ENCODE measurements at regions of chr3 and their contacts with region 1.

Region 1: GRCh38 chr3:154247806-154248415 is 76.4 kb downstream of the DHX36 start:
- DNase-seq: peak; percentile 45
- H3K4me3 Mint-ChIP-seq: no peak overlapping the region
- H3K27ac Mint-ChIP-seq: peak overlapping the region; percentile 29
- H3K4me1 Mint-ChIP-seq: peaks cover 61% of the 10 kb centered on the region
- H3K27me3 Mint-ChIP-seq: no peaks in the 10 kb centered on the region
- CTCF ChIP-seq: no peak

Region 2: DNA sequence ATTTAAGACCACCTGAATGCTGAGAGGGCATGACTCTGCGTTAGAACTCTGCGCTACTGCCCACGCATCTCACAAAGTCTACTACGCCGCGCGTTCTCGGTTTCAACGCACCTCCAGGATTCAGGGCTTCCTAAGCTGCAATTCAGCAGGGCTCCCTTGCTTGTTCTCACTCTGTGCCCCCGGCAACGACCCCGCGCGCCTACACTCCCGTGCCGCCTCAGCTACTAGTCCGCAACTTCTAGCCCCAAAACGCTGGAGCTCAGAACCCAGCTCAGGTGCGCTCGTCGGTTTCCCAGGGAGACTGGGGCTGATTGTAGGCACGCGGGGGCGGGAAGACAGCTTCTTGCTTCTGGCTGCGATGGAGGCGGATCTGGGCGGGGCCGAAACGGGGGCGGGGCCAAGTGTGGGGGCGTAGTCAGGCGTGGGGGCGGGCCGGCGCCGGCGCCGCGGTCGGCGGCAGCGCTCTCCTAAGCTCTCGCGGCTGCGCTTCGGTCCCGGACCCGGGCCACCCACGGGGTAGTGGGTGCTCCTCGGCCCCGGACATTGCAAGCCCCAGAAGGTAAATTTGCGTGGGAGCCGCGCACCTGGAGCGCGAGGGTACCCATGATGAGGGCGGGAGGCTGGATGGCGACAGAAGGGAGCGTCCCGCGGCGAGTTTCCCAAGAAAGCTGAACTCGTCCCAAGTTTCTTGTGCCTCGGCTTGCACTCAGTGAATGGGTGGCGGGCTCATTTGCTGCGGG is 126.8 kb before region 1 on chr3 and contains the start of gene ARHGEF26:
- CTCF ChIA-PET with region 1: interaction called, 10 read pairs
- intact Hi-C with region 1: loop called (anchors 1 kb)
- DNase-seq: peak; percentile 97
- H3K4me3 Mint-ChIP-seq: peak within 1 kb of the TSS; percentile 75
- H3K27ac Mint-ChIP-seq: peak within 1 kb of the TSS; percentile 6
- H3K4me1 Mint-ChIP-seq: peaks cover 44% of the 10 kb centered on the region
- H3K27me3 Mint-ChIP-seq: no peaks in the 10 kb centered on the region
- CTCF ChIP-seq: no peak
- total RNA-seq, gene ARHGEF26: 19.0 and 21.4 TPM in 2 replicates

Region 3: DNA sequence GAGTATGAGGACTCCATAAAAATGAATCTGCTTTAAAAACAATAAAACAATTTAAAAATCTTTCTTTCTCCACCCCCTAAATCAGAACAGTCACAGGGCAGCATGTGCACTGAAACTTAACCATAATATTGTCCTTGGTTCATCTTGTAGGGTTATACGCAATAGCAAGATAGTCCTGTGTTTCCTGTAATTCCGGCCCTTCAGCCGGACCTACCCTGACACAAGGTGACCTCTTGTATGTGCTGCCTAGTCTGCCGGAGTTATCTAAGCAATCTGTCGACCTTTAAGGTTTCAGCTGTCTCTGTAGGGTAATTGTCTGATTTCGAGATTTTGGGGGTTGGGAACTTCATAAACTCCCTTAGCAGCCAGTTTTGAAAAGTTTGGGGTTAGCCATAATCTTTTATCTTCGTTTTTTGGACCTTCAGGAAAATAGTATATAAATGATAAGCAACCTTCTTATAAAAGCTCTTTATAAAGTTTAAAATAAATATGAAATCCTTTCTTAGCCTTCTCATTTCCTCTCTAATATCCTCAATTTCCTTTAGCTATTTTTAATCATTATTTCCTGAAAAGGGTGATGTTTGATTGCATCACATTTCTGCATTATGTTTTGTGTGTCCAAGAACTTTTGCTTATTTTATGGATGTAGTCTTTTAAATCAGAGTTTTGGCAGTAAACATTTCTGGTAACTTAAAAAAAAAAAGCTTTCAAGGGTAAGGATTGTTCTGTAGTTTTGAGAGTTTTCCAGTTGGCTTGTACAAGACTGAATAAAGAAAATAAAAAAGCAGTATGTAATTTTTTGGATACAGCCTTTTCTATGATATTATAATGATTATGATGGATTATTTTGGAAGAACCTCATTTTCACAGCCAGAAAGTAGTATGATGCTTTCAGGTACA is 23.3 kb before region 1 on chr3:
- CTCF ChIA-PET with region 1: no interaction called
- intact Hi-C with region 1: no loop called
- DNase-seq: no peak
- H3K4me3 Mint-ChIP-seq: no peak overlapping the region
- H3K27ac Mint-ChIP-seq: no peak overlapping the region
- H3K4me1 Mint-ChIP-seq: no peaks in the 10 kb centered on the region
- H3K27me3 Mint-ChIP-seq: no peaks in the 10 kb centered on the region
- CTCF ChIP-seq: no peak

Measured in Calu3 (cell line).